Vagina (tissue), 2 donors: ENCODE measurements at regions of chr5 and their contacts with region 1.

Region 1: GRCh38 chr5:9544502-9545135 is 1.3 kb downstream of the SEMA5A start:
- DNase-seq: peak in 1 of 2 donors; percentile 92
- H3K4me3 ChIP-seq: peak overlapping the region; percentile 77 to 86
- H3K27ac ChIP-seq: peak overlapping the region; percentile 81
- H3K4me1 ChIP-seq: peaks cover 24% of the 10 kb centered on the region
- H3K27me3 ChIP-seq: no peaks in the 10 kb centered on the region
- CTCF ChIP-seq: peak; percentile 40 to 92 (median 76)
- POLR2A ChIP-seq: peak in 1 of 2 donors; percentile 12

Region 2: GRCh38 chr5:9283021-9283420 is 261.6 kb before region 1 on chr5:
- intact Hi-C with region 1: loop called (anchors 2 kb)
- DNase-seq: no peak
- H3K4me3 ChIP-seq: no peak overlapping the region
- H3K27ac ChIP-seq: peak overlapping the region; percentile 63
- H3K4me1 ChIP-seq: peaks cover 22% of the 10 kb centered on the region
- H3K27me3 ChIP-seq: no peaks in the 10 kb centered on the region
- CTCF ChIP-seq: no peak
- POLR2A ChIP-seq: no peak